SK-N-SH (cell line): ENCODE measurements at regions of chr11 and their contacts with region 1.

Region 1: GRCh38 chr11:123246749-123247495 is 51.9 kb upstream of the CLMP start:
- DNase-seq: peak; percentile 80
- H3K4me3 ChIP-seq: peak overlapping the region in 1 of 2 experiments; percentile 46; a peak in 1 of 4 replicates
- H3K27ac ChIP-seq: no peak overlapping the region
- H3K4me1 ChIP-seq: peaks cover 7 to 14% of the 10 kb centered on the region in 2 experiments; a peak in 2 of 4 replicates
- H3K27me3 ChIP-seq: no peaks in the 10 kb centered on the region
- CTCF ChIP-seq: peak; percentile 98
- EP300 ChIP-seq: no peak
- RAD21 ChIP-seq: peak; percentile 99

Region 2: GRCh38 chr11:123110356-123110755 is 136.6 kb before region 1 on chr11:
- CTCF ChIA-PET with region 1: interaction called, 437 read pairs
- POLR2A ChIA-PET with region 1: interaction called, 3 read pairs
- DNase-seq: no peak
- H3K4me3 ChIP-seq: no peak overlapping the region
- H3K27ac ChIP-seq: no peak overlapping the region
- H3K4me1 ChIP-seq: peaks cover 4 to 21% of the 10 kb centered on the region in 2 experiments; a peak in 3 of 4 replicates
- H3K27me3 ChIP-seq: no peaks in the 10 kb centered on the region
- CTCF ChIP-seq: no peak
- EP300 ChIP-seq: no peak
- RAD21 ChIP-seq: no peak

Region 3: DNA sequence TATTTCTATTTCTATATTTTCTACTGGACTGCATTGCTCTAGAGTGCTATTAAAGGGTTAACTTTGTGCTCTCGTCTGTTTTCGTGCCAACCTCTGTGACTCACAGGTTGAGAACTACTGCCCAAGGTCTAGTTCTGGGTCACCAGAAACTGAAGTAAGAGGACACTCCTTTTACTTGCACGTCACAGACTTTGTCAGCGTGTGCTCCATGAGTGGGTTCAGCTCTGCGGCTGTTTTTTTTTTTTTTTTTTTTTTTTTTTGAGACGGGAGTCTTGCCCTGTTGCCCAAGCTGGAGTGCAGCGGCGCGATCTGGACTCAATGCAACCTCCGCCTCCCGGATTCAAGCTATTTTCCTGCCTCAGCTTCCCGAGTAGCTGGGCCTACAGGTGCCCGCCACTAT is 101.7 kb before region 1 on chr11:
- CTCF ChIA-PET with region 1: interaction called, 15 read pairs
- POLR2A ChIA-PET with region 1: no interaction called
- DNase-seq: peak; percentile 66
- H3K4me3 ChIP-seq: peak overlapping the region; percentile 21 to 49; a peak in 3 of 4 replicates
- H3K27ac ChIP-seq: peak overlapping the region; percentile 87 to 95
- H3K4me1 ChIP-seq: peaks cover 9 to 17% of the 10 kb centered on the region in 2 experiments
- H3K27me3 ChIP-seq: no peaks in the 10 kb centered on the region
- CTCF ChIP-seq: no peak
- EP300 ChIP-seq: peak in 1 of 2 experiments; percentile 29; a peak in 1 of 4 replicates
- RAD21 ChIP-seq: no peak

Region 4: DNA sequence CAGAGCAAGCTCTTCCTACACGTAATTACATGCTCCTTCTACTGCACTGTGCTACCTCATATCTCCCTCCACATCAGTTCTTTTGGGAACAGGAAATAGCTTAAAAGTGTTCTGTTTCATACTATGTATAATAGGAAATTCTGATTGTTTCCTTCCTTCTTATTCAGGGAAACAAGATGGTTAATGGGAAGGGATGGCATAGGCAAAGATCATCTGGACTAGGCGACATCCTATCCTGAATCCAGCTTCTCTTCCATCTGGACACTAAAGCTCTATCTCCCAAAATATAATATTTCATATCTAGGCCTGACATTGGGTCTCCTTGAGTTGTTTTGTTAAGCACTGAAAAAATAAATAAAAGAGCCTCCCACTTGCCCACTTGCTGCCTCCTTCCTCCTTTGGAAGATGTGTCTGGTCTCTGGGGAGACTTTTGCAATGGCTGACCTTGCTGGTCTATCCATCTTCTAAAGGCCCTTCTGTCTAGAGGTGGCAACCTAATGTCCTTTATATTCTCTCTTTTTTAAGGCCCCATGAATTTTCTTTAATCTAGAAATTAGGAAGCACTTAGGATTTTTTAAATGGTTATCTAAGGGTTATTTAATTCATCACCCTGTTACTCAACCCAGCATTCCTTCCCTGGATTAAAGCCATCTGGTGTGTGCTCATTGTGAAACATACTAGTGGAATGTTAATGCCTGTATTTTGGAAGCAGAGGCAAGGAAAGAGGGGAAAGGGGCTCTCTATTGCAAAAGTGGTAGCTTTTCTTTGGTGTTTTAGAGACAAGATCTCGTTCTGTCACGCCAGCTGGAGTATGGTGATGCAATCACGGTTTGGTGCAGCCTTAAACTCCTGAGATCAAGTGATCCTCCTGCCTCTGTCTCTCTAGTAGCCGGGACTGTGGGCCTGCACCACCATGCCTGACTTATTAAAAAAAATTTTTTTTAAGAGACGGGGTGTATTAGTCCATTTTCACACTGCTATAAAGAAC is 72.4 kb before region 1 on chr11:
- CTCF ChIA-PET with region 1: interaction called, 10 read pairs
- POLR2A ChIA-PET with region 1: no interaction called
- DNase-seq: no peak
- H3K4me3 ChIP-seq: no peak overlapping the region
- H3K27ac ChIP-seq: peak overlapping the region; percentile 68 to 88; a peak in 3 of 4 replicates
- H3K4me1 ChIP-seq: peaks cover 3 to 55% of the 10 kb centered on the region in 2 experiments; a peak in 3 of 4 replicates
- H3K27me3 ChIP-seq: no peaks in the 10 kb centered on the region
- CTCF ChIP-seq: no peak
- EP300 ChIP-seq: peak; percentile 32 to 94; a peak in 3 of 4 replicates
- RAD21 ChIP-seq: no peak

Region 5: GRCh38 chr11:123211149-123211852 is 35.6 kb before region 1 on chr11:
- CTCF ChIA-PET with region 1: interaction called, 16 read pairs
- POLR2A ChIA-PET with region 1: no interaction called
- DNase-seq: peak; percentile 44
- H3K4me3 ChIP-seq: no peak overlapping the region
- H3K27ac ChIP-seq: no peak overlapping the region
- H3K4me1 ChIP-seq: peaks cover 13 to 14% of the 10 kb centered on the region in 2 experiments; a peak in 2 of 4 replicates
- H3K27me3 ChIP-seq: no peaks in the 10 kb centered on the region
- CTCF ChIP-seq: no peak
- EP300 ChIP-seq: no peak
- RAD21 ChIP-seq: no peak

Region 6: DNA sequence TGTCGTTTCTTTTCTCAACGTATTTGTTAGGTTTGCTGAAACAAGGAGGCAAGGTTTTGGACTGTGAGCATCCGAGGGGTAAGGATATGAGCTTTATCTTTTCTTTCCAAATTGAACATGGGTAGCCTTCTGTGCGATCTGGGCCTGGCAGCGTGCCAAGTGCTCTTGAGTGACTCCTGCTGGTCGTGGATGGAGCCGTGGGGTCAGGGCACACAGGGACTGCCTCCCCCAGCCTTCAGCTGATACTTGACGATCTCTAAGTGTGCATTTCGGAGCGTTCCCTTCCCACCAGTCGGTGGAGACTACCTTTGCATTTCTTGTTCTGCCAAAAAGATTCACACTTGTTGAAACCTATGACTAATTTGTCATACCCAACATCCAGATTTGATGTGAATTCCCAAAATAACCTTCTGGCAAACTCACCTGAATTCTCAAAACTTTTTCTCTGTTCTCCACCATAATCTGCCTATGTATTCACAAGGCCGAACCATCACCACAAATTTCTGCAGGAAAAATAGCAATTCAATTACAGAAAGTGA is 11.7 kb before region 1 on chr11:
- CTCF ChIA-PET with region 1: interaction called, 29 read pairs
- POLR2A ChIA-PET with region 1: no interaction called
- DNase-seq: peak; percentile 68
- H3K4me3 ChIP-seq: peak overlapping the region in 1 of 2 experiments; percentile 17; a peak in 1 of 4 replicates
- H3K27ac ChIP-seq: peak overlapping the region; percentile 54 to 74; a peak in 3 of 4 replicates
- H3K4me1 ChIP-seq: peaks cover 2 to 20% of the 10 kb centered on the region in 2 experiments; a peak in 2 of 4 replicates
- H3K27me3 ChIP-seq: no peaks in the 10 kb centered on the region
- CTCF ChIP-seq: peak; percentile 79
- EP300 ChIP-seq: no peak
- RAD21 ChIP-seq: peak; percentile 41; the same call in 1 of the 2 replicates

Region 7: DNA sequence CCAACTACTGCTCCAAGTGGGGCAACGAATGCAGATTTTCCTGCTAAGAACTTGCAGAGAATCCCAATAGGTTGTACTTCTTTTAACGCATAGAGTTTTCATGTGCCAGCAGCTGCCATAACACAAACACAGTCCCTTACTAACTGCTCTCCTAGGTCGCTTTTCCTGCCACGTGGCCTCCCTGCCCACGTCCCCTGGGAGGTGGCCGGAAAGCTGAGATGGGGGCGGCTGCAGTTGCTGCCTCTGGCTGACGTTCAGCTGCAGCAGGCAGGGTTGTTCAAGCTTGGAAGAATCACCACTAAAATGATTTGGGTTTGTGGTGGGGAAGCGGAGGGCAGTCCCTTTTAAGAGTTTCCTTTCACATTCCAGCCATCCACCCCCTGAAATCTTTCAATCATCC is 455.2 kb after region 1 on chr11:
- CTCF ChIA-PET with region 1: no interaction called
- POLR2A ChIA-PET with region 1: no interaction called
- DNase-seq: no peak
- H3K4me3 ChIP-seq: no peak overlapping the region
- H3K27ac ChIP-seq: no peak overlapping the region
- H3K4me1 ChIP-seq: peaks cover 0 to 2% of the 10 kb centered on the region in 2 experiments; a peak in 2 of 4 replicates
- H3K27me3 ChIP-seq: peaks cover 11% of the 10 kb centered on the region; the same call in 1 of the 2 replicates
- CTCF ChIP-seq: no peak
- EP300 ChIP-seq: no peak
- RAD21 ChIP-seq: no peak